Esophagus muscularis mucosa (tissue), 4 donors: ENCODE measurements at regions of chr1 and their contacts with region 1.

Region 1: DNA sequence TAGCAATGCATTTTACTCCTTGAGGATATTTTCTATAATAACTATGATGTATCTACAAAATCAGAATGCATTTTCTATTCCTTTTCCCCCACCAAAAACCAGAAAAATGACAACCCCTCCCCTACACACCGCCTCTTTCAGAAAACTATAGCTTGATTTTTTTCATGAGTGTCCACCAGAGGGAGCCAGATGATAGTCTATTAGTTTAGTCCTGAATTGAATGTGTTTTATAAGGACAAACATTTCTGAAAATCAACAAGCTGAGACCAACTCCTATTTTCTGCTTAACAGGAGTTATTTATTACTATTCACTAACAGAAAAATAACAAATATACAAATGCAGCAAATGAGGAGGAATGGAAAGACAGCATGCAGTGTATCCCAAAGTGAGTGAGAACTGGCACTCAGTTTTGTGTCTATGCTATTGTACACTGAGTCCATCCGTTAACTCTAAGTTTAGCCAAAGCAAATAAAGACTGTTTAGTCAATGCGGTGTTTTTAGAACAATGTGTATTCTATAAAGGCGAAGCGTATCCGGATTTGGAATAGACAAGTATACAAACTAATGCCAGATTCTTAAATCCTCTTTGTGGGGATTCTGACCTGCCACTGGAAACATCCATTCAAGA is 182.6 kb downstream of the VAV3 start:
- DNase-seq: no peak
- H3K4me3 ChIP-seq: no peak overlapping the region
- H3K27ac ChIP-seq: no peak overlapping the region
- H3K4me1 ChIP-seq: peaks cover 0 to 19% (median 9%) of the 10 kb centered on the region in 4 donors
- H3K27me3 ChIP-seq: no peaks in the 10 kb centered on the region
- CTCF ChIP-seq: peak; percentile 65 to 72 (median 70)
- EP300 ChIP-seq: no peak
- POLR2A ChIP-seq: no peak

Region 2: DNA sequence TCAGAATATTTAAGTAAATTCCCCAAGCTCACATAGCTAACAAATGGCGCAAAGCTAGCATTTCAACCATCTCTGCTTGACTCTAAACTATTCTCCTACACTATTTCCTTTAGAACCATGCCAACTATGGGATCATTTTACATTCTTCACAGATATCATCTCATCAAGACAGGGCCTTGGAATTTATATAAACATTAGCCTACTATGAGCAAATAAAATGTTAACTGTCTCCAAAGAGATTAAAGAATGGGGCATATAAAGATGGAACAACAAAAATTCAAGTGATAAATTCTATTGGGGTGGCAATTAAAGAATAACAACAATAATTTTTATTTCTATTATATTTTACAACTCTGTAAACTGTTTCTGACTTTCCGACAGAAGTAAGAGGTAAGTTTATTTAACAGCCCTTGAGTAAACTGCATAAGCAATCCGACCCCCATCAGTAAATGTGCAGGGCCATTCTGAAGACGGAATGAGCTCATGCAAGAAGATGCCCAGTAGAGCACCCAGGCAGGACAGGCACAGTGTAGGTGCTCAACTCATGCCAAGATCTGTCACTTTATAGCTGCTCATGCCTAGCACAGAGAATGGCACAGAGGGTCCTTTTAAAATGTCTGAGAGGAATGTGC is 79.3 kb before region 1 on chr1:
- intact Hi-C with region 1: no loop called
- DNase-seq: no peak
- H3K4me3 ChIP-seq: no peak overlapping the region
- H3K27ac ChIP-seq: no peak overlapping the region
- H3K4me1 ChIP-seq: no peaks in the 10 kb centered on the region
- H3K27me3 ChIP-seq: no peaks in the 10 kb centered on the region
- CTCF ChIP-seq: no peak
- EP300 ChIP-seq: no peak
- POLR2A ChIP-seq: no peak

Region 3: DNA sequence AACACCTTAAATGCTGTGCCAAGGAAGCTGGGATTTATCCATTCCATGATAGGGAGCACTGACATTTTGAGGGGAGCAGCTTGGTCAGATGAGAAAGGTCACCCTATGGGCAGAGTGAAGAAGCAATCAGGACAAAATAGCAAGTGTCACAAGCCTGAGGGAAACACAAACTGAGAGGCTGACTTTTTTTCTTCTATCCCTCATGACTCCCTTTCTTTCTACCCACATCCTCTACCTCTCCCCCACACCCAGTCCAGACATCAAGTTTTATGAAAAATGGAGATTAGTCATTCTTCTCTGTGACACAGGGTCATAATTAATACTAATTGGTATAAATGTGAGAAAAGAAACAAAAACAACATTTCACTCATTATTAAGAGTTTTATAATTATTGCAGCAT is 314.7 kb after region 1 on chr1:
- intact Hi-C with region 1: no loop called
- DNase-seq: no peak
- H3K4me3 ChIP-seq: no peak overlapping the region
- H3K27ac ChIP-seq: no peak overlapping the region
- H3K4me1 ChIP-seq: no peaks in the 10 kb centered on the region
- H3K27me3 ChIP-seq: no peaks in the 10 kb centered on the region
- CTCF ChIP-seq: no peak
- EP300 ChIP-seq: no peak
- POLR2A ChIP-seq: no peak

Region 4: GRCh38 chr1:108125312-108126138 is 343.2 kb after region 1 on chr1:
- intact Hi-C with region 1: loop called (anchors 1 kb)
- DNase-seq: no peak
- H3K4me3 ChIP-seq: no peak overlapping the region
- H3K27ac ChIP-seq: no peak overlapping the region
- H3K4me1 ChIP-seq: peaks cover 0 to 14% (median 12%) of the 10 kb centered on the region in 4 donors
- H3K27me3 ChIP-seq: no peaks in the 10 kb centered on the region
- CTCF ChIP-seq: peak; percentile 91 to 96 (median 92)
- EP300 ChIP-seq: no peak
- POLR2A ChIP-seq: no peak